HCT116 (cell line): ENCODE measurements at regions of chr11 and their contacts with region 1.

Region 1: DNA sequence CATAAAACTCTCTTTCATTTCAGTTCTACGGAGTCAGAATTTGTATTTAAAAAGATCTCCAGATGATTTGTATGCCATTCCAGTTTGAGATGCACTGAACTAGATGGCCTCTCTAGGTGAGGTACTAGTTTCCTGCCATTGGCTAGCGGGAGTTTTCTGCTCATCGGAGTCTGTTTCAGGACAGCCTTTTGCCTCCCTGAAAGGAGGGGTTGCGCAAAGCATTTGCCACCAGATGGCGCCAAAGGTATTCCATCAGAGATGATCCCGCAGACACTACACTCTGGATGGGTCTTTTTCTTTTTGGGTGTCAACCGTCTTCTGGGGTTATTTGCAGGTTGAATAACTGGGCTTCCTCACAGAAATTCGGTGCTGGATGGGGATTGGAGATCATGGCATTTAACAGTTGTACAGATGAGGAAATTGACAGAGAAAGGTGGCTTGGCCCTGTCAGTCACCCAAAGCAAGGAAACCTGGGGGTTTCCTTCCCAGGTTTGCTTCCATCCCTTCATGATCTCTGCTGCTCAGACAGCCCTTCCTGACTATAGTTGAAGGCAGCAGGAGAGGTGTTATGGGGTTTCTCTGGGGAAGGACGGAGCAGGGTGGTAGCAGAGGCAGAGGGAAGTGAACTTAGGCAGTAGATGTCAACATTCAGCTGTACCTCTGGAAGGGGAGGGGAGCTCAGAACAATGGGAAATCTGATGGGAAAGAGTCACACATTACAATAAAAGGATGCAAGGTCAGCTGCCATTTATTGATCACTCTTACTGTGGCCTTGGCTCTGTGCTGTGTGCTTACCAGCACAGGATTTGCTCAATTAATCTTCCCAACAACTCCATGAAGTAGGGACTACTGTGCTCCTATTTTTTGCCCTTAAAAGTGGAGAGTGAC is 81.6 kb downstream of the CCDC81 start:
- DNase-seq: peak; percentile 67
- ATAC-seq: peak; percentile 86
- H3K4me3 ChIP-seq: no peak overlapping the region
- H3K27ac ChIP-seq: no peak overlapping the region
- H3K4me1 ChIP-seq: peaks cover 14 to 15% of the 10 kb centered on the region in 2 experiments
- H3K27me3 ChIP-seq: no peaks in the 10 kb centered on the region
- CTCF ChIP-seq: peak; percentile 86 to 97 (median 96)
- POLR2A ChIP-seq: no peak
- RAD21 ChIP-seq: peak; percentile 98

Region 2: DNA sequence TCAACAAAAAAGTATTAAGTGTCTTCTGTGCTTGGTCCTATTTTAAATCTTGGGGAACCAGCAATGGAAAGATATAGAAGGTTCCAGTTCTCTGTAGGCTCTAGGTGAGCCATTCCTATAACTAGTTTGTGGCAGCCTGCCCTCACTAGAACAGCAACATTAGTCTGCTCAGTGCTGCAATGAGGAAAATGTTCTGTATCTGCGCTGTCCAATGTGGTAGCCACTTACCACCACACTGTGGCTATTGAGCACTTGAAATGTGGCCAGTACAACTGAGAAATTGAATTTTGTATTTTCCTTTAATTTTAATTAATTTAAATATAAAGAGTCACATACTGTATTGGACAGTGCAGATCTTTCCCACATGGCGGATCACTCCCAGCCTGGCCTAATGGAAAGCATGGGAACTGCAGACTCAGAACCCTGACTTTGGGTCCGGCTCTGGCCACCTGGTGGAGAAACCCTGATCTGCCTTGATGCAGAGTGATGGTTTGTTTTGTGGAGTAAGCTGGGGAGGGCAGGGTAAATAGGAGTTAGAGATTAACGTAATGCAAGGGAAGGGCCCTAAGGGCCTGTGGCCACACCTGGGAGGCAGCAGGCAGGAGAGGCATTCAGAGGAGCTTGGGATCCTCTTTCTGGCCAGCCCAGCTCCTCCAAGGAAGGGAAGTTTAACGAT is 115.1 kb after region 1 on chr11:
- CTCF ChIA-PET with region 1: interaction called, 14 read pairs
- POLR2A ChIA-PET with region 1: no interaction called
- RAD21 ChIA-PET with region 1: no interaction called
- intact Hi-C with region 1: loop called (anchors 1 kb)
- DNase-seq: peak; percentile 80
- ATAC-seq: peak; percentile 98
- H3K4me3 ChIP-seq: no peak overlapping the region
- H3K27ac ChIP-seq: no peak overlapping the region
- H3K4me1 ChIP-seq: peaks cover 6 to 25% of the 10 kb centered on the region in 2 experiments; a peak in 2 of 4 replicates
- H3K27me3 ChIP-seq: no peaks in the 10 kb centered on the region; the same call in 1 of the 2 replicates
- CTCF ChIP-seq: peak; percentile 77 to 96 (median 93)
- POLR2A ChIP-seq: no peak
- RAD21 ChIP-seq: peak; percentile 79

Region 3: DNA sequence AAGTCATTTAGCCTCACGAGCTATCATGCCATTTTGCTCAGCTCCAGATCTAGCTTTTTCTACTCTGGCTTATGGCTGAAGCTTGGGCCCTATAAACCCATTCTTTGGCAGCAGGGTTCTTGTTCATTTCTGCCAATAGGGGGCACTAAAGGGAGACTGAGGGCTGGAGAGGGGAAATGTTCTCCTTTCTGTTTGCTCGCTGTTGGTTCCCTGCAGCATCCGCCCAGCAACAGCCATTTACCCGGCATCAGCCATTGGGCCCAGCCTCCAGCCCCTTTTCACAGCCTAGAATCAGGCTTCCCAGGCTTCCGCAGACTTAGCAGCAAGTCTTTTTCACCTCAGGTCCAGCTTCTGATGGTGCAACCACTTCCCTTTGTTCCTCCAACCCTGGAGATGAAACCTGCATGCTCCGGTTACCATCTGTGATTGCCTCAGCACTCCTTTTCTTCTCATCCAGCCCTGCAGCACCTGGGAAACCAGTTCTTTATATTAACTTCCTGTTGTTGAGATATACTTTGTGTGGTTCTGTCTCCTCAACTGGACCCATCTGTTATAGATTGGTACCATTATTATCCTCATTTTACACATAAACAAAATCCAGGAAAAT is 220.4 kb after region 1 on chr11:
- CTCF ChIA-PET with region 1: no interaction called
- POLR2A ChIA-PET with region 1: no interaction called
- RAD21 ChIA-PET with region 1: no interaction called
- intact Hi-C with region 1: loop called (anchors 2 kb)
- DNase-seq: peak; percentile 33
- ATAC-seq: peak; percentile 73
- H3K4me3 ChIP-seq: no peak overlapping the region
- H3K27ac ChIP-seq: no peak overlapping the region
- H3K4me1 ChIP-seq: peaks cover 0 to 3% of the 10 kb centered on the region in 2 experiments; a peak in 3 of 4 replicates
- H3K27me3 ChIP-seq: no peaks in the 10 kb centered on the region
- CTCF ChIP-seq: peak; percentile 45 to 67 (median 63); a peak in 5 of 6 replicates
- POLR2A ChIP-seq: no peak
- RAD21 ChIP-seq: peak; percentile 62

Region 4: GRCh38 chr11:86818466-86819192 is 362.3 kb after region 1 on chr11:
- CTCF ChIA-PET with region 1: no interaction called
- POLR2A ChIA-PET with region 1: no interaction called
- RAD21 ChIA-PET with region 1: no interaction called
- intact Hi-C with region 1: loop called (anchors 1 kb)
- DNase-seq: peak; percentile 52
- ATAC-seq: peak; percentile 65
- H3K4me3 ChIP-seq: no peak overlapping the region
- H3K27ac ChIP-seq: no peak overlapping the region
- H3K4me1 ChIP-seq: peaks cover 0 to 11% of the 10 kb centered on the region in 2 experiments; a peak in 2 of 4 replicates
- H3K27me3 ChIP-seq: no peaks in the 10 kb centered on the region; the same call in 1 of the 2 replicates
- CTCF ChIP-seq: peak; percentile 51 to 93 (median 83)
- POLR2A ChIP-seq: no peak
- RAD21 ChIP-seq: peak; percentile 97

Region 5: GRCh38 chr11:86919557-86920210 is 463.4 kb after region 1 on chr11:
- CTCF ChIA-PET with region 1: no interaction called
- POLR2A ChIA-PET with region 1: no interaction called
- RAD21 ChIA-PET with region 1: no interaction called
- intact Hi-C with region 1: loop called (anchors 1 kb)
- DNase-seq: peak; percentile 54
- ATAC-seq: peak; percentile 84
- H3K4me3 ChIP-seq: no peak overlapping the region
- H3K27ac ChIP-seq: no peak overlapping the region
- H3K4me1 ChIP-seq: peaks cover 12 to 20% of the 10 kb centered on the region in 2 experiments
- H3K27me3 ChIP-seq: no peaks in the 10 kb centered on the region
- CTCF ChIP-seq: peak; percentile 67 to 77 (median 71)
- POLR2A ChIP-seq: no peak
- RAD21 ChIP-seq: peak; percentile 89